MCF 10A (cell line): ENCODE measurements at regions of chr17 and their contacts with region 1.

Region 1: GRCh38 chr17:45828628-45829027 is 16.1 kb upstream of the SPPL2C start:
- DNase-seq: peak; percentile 30
- H3K4me3 Mint-ChIP-seq: no peak overlapping the region
- H3K27ac Mint-ChIP-seq: no peak overlapping the region
- H3K4me1 Mint-ChIP-seq: no peaks in the 10 kb centered on the region
- H3K27me3 Mint-ChIP-seq: peaks cover 35% of the 10 kb centered on the region
- CTCF ChIP-seq: no peak

Region 2: GRCh38 chr17:45640141-45640850 is 188.3 kb before region 1 on chr17:
- CTCF ChIA-PET with region 1: interaction called, 76 read pairs
- POLR2A ChIA-PET with region 1: interaction called, 7 read pairs
- intact Hi-C with region 1: loop called (anchors 1 kb)
- DNase-seq: peak; percentile 76
- H3K4me3 Mint-ChIP-seq: no peak overlapping the region
- H3K27ac Mint-ChIP-seq: no peak overlapping the region
- H3K4me1 Mint-ChIP-seq: no peaks in the 10 kb centered on the region
- H3K27me3 Mint-ChIP-seq: peaks cover 4% of the 10 kb centered on the region
- CTCF ChIP-seq: peak; percentile 96

Region 3: GRCh38 chr17:45648642-45649041 is 180.0 kb before region 1 on chr17:
- CTCF ChIA-PET with region 1: interaction called, 76 read pairs
- POLR2A ChIA-PET with region 1: interaction called, 3 read pairs
- intact Hi-C with region 1: no loop called
- DNase-seq: no peak
- H3K4me3 Mint-ChIP-seq: no peak overlapping the region
- H3K27ac Mint-ChIP-seq: no peak overlapping the region
- H3K4me1 Mint-ChIP-seq: no peaks in the 10 kb centered on the region
- H3K27me3 Mint-ChIP-seq: peaks cover 78% of the 10 kb centered on the region
- CTCF ChIP-seq: no peak

Region 4: DNA sequence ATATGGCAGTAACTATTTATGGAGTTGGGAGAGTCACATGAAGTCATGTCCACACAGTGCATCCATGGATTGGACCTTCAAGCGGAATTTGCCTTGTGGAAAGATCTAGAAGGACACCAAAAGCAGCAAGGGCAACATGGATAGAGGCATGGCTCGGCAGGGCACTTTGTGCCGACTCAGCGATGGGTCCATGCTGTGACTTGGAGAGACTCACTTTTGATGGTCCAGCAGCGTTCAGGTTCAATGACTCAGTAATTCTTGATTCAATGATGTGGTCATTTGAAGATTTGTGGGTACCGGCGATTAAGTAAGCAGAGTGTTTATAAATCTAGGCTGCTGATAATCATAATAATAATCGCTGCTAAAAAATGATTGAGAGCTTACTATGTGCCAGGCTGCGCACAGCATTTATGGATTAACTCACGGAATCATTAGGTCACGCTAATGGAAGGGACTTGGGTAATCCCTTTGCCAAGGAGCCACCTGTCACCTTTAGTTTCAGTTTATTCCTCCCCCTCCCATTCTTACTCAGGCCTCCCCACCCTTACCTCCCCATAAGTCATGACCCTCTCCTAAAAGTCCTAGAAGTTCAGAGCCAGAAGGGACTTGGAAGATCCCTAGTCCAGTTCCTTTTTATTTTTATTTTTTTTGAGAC is 172.0 kb before region 1 on chr17:
- CTCF ChIA-PET with region 1: interaction called, 11 read pairs
- POLR2A ChIA-PET with region 1: no interaction called
- intact Hi-C with region 1: no loop called
- DNase-seq: no peak
- H3K4me3 Mint-ChIP-seq: no peak overlapping the region
- H3K27ac Mint-ChIP-seq: no peak overlapping the region
- H3K4me1 Mint-ChIP-seq: no peaks in the 10 kb centered on the region
- H3K27me3 Mint-ChIP-seq: peaks cover 48% of the 10 kb centered on the region
- CTCF ChIP-seq: no peak

Region 5: GRCh38 chr17:45666046-45666600 is 162.5 kb before region 1 on chr17:
- CTCF ChIA-PET with region 1: interaction called, 10 read pairs
- POLR2A ChIA-PET with region 1: no interaction called
- intact Hi-C with region 1: no loop called
- DNase-seq: no peak
- H3K4me3 Mint-ChIP-seq: no peak overlapping the region
- H3K27ac Mint-ChIP-seq: no peak overlapping the region
- H3K4me1 Mint-ChIP-seq: no peaks in the 10 kb centered on the region
- H3K27me3 Mint-ChIP-seq: peaks cover 58% of the 10 kb centered on the region
- CTCF ChIP-seq: peak; percentile 28

Region 6: GRCh38 chr17:45814622-45815606 is 13.7 kb before region 1 on chr17:
- CTCF ChIA-PET with region 1: interaction called, 11 read pairs
- POLR2A ChIA-PET with region 1: no interaction called
- intact Hi-C with region 1: no loop called
- DNase-seq: no peak
- H3K4me3 Mint-ChIP-seq: no peak overlapping the region
- H3K27ac Mint-ChIP-seq: no peak overlapping the region
- H3K4me1 Mint-ChIP-seq: no peaks in the 10 kb centered on the region
- H3K27me3 Mint-ChIP-seq: peaks cover 10% of the 10 kb centered on the region
- CTCF ChIP-seq: no peak

Region 7: GRCh38 chr17:45852535-45853297 is 24.1 kb after region 1 on chr17:
- CTCF ChIA-PET with region 1: interaction called, 18 read pairs
- POLR2A ChIA-PET with region 1: no interaction called
- intact Hi-C with region 1: no loop called
- DNase-seq: peak; percentile 73
- H3K4me3 Mint-ChIP-seq: no peak overlapping the region
- H3K27ac Mint-ChIP-seq: no peak overlapping the region
- H3K4me1 Mint-ChIP-seq: no peaks in the 10 kb centered on the region
- H3K27me3 Mint-ChIP-seq: peaks cover 34% of the 10 kb centered on the region
- CTCF ChIP-seq: peak; percentile 87